Activated naive CD4-positive, alpha-beta T cell treated with anti-CD3 and anti-CD28 coated beads, Interleukin-2, amount 10 ng/mL, durations not matched to agents 7 days and 5 days (primary cell): ENCODE measurements at regions of chr1 and their contacts with region 1.

Region 1: DNA sequence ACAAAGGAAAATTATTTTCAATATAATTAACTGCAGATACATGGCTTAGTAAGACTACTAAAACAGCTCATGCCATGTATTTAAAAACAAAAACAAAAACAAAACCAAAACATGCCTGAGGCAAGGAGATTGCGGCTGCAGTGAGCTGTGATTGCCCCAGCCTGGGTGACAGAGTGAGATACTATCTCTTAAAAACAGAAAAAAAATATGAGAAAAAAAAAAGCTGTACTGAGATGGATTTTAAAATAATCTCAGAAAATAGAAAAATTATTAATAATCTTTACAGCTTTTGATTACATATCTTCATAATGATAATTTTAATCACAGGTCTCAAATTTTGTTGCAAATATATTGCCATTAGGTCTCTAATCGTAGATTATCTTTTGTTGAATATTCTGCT is 24.0 kb upstream of the LIN9 start:
- DNase-seq: peak; percentile 30
- H3K4me3 Mint-ChIP-seq: no peak overlapping the region
- H3K27ac Mint-ChIP-seq: no peak overlapping the region
- H3K4me1 Mint-ChIP-seq: peaks cover 11% of the 10 kb centered on the region
- H3K27me3 Mint-ChIP-seq: peaks cover 3% of the 10 kb centered on the region

Region 2: GRCh38 chr1:225809842-225810578 is 522.9 kb before region 1 on chr1 and contains the start of gene EPHX1:
- CTCF ChIA-PET with region 1: no interaction called
- DNase-seq: peak; percentile 83
- H3K4me3 Mint-ChIP-seq: peak within 1 kb of the TSS; percentile 80
- H3K27ac Mint-ChIP-seq: peak within 1 kb of the TSS; percentile 33
- H3K4me1 Mint-ChIP-seq: peaks cover 14% of the 10 kb centered on the region
- H3K27me3 Mint-ChIP-seq: peaks cover 42% of the 10 kb centered on the region

Region 3: DNA sequence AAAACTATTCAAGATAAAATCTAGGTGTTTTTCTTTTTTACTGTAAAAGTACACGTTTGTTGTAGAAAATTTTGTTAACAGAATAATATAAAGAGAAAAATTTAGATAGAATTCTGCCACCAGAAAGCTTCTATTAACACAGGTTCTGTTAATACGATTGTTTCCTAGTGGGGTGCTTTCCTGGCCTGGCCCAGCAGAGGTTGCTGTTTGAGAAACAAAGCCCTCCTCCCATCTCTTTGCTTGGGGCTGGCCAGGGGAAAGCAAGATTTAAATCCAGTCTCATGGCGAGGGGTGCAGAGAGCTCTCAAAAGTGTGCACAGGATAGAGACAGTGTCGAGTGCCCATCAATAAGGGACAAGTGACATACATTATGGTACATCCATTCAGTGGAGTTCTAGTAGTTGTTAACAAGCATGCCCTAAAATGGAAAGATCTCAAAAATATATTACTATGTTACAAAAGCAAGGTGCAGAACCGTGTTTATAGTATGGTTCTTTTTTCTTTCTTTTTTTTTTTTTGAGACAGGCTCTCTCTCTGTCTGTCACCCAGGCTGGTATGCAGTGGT is 131.8 kb before region 1 on chr1:
- CTCF ChIA-PET with region 1: interaction called, 13 read pairs
- DNase-seq: peak; percentile 34
- H3K4me3 Mint-ChIP-seq: no peak overlapping the region
- H3K27ac Mint-ChIP-seq: no peak overlapping the region
- H3K4me1 Mint-ChIP-seq: peaks cover 2% of the 10 kb centered on the region
- H3K27me3 Mint-ChIP-seq: peaks cover 31% of the 10 kb centered on the region

Region 4: DNA sequence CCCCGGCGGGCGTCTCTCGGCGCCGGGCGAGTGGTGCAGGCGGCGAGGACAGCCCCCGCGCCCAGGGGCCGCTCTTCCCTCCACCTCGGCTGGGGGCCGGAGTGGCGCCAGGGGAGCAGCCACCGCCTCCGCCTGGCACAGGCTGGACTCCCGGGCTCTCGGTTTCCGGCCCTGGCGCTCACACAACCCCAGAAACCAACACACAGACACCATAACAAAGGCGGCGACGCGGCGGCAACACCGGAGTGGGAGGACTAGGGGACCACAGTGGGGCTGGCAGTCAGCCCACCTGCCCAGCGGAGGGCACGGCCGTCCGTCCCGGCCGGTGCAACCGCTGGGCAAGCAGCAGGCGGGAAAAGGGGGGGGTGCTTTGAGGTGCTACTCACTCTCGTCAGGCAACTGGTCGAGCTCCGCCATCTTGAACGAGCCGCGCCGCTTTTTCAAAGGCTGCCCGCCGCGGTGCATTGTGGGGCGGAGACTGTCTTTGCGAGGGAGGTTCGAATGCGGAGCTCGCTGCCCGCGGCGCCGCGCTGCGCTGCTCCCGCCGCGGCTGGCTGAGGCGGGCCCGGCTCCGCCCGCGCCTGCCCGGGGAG is 24.1 kb before region 1 on chr1 and contains the start of gene LIN9:
- CTCF ChIA-PET with region 1: interaction called, 12 read pairs
- DNase-seq: peak; percentile 96
- H3K4me3 Mint-ChIP-seq: peak within 1 kb of the TSS; percentile 89
- H3K27ac Mint-ChIP-seq: peak within 1 kb of the TSS; percentile 89
- H3K4me1 Mint-ChIP-seq: peaks cover 36% of the 10 kb centered on the region
- H3K27me3 Mint-ChIP-seq: peaks cover 30% of the 10 kb centered on the region

Region 5: GRCh38 chr1:226360106-226360746 is 27.3 kb after region 1 on chr1:
- CTCF ChIA-PET with region 1: no interaction called
- DNase-seq: no peak
- H3K4me3 Mint-ChIP-seq: no peak overlapping the region
- H3K27ac Mint-ChIP-seq: no peak overlapping the region
- H3K4me1 Mint-ChIP-seq: no peaks in the 10 kb centered on the region
- H3K27me3 Mint-ChIP-seq: no peaks in the 10 kb centered on the region